ENCODE measurements at regions of chr13 and their contacts with region 1.

Region 1: GRCh38 chr13:52001120-52001731 is 10.0 kb downstream of the ATP7B start:
- DNase-seq: no peak
- ATAC-seq: peak; percentile 83
- H3K4me3 Mint-ChIP-seq: no peak overlapping the region
- H3K27ac Mint-ChIP-seq: no peak overlapping the region
- H3K4me1 Mint-ChIP-seq: no peaks in the 10 kb centered on the region
- H3K27me3 Mint-ChIP-seq: peaks cover 24% of the 10 kb centered on the region

Region 2: DNA sequence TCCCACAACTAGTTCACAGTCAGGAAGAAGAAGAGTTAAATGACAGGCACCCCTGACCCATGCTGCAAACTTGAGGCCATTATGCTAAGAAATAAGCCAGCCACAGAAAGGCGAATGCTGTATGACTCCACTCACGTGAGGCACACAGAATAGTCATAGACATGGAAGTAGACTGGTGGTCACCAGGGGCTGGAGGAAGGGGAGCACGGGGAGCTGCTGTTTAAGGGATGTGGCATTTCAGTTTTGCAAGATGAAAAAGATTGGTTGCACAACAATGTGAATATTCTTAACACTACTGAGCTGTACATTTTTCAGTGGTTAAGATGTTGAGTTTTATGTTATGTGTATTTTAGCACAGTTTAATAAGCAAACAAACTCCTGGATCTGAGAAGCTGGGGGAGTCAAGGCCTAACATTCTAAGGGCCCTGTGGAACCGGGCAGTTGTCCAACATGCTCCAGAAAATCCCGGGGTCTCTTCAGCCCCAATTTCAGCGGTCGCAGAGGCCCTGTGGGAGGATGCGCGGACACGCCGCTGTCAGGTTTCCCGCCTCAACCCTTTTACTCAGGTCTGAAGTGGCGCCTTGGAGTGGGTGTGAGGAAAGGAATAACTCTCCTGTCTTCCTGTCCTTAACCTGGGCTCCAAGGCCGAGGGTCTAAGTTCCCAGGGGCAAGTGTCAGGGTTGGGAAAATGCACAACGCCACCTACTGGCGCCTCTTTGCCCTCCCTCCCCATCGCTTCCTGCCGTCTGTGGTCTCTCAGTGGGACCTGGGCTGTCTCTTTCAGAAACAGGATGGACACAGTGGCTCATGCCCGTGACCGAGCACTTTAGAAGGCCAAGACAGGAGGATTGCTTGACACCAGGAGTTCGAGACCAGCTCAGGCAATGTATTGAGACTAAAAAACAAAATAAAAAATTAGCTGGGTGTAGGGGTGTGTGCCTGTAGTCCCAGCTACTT is 151.8 kb before region 1 on chr13:
- CTCF ChIA-PET with region 1: no interaction called
- POLR2A ChIA-PET with region 1: no interaction called
- DNase-seq: peak; percentile 54
- ATAC-seq: peak; percentile 77
- H3K4me3 Mint-ChIP-seq: no peak overlapping the region
- H3K27ac Mint-ChIP-seq: no peak overlapping the region
- H3K4me1 Mint-ChIP-seq: peaks cover 13% of the 10 kb centered on the region
- H3K27me3 Mint-ChIP-seq: peaks cover 10% of the 10 kb centered on the region

Region 3: DNA sequence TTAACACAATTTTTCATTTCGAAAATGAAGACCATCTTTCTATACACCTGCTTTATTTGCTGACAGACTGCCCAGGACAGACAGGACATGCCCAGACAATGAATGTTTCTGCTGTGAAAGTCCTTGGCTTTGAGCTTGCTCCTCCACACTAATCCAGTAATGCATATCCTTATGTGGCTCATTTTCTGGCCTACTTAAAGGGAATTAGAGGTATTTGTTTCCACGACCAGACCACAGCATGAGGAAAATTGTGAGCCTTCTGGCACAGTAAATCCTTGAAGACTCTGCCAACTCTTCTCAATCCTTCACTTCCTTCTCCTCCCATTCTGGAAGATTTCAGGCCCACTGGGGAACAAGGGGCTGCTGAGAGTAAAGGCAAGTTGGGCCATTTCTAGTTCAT is 113.8 kb before region 1 on chr13:
- CTCF ChIA-PET with region 1: no interaction called
- POLR2A ChIA-PET with region 1: no interaction called
- DNase-seq: no peak
- ATAC-seq: no peak
- H3K4me3 Mint-ChIP-seq: no peak overlapping the region
- H3K27ac Mint-ChIP-seq: no peak overlapping the region
- H3K4me1 Mint-ChIP-seq: no peaks in the 10 kb centered on the region
- H3K27me3 Mint-ChIP-seq: peaks cover 9% of the 10 kb centered on the region

Region 4: GRCh38 chr13:52011632-52012511 is 10.6 kb after region 1 on chr13 and contains the start of gene ALG11:
- CTCF ChIA-PET with region 1: interaction called, 23 read pairs
- POLR2A ChIA-PET with region 1: interaction called, 3 read pairs
- DNase-seq: peak; percentile 100
- ATAC-seq: peak; percentile 100
- H3K4me3 Mint-ChIP-seq: peak within 1 kb of the TSS; percentile 99
- H3K27ac Mint-ChIP-seq: peak within 1 kb of the TSS; percentile 92
- H3K4me1 Mint-ChIP-seq: peaks cover 13% of the 10 kb centered on the region
- H3K27me3 Mint-ChIP-seq: peaks cover 28% of the 10 kb centered on the region
- total RNA-seq, gene ALG11: 22.9 to 28.3 TPM

Region 5: GRCh38 chr13:52025475-52026245 is 24.4 kb after region 1 on chr13:
- CTCF ChIA-PET with region 1: no interaction called
- POLR2A ChIA-PET with region 1: no interaction called
- DNase-seq: no peak
- ATAC-seq: no peak
- H3K4me3 Mint-ChIP-seq: no peak overlapping the region
- H3K27ac Mint-ChIP-seq: no peak overlapping the region
- H3K4me1 Mint-ChIP-seq: peaks cover 4% of the 10 kb centered on the region
- H3K27me3 Mint-ChIP-seq: no peaks in the 10 kb centered on the region

Region 6: DNA sequence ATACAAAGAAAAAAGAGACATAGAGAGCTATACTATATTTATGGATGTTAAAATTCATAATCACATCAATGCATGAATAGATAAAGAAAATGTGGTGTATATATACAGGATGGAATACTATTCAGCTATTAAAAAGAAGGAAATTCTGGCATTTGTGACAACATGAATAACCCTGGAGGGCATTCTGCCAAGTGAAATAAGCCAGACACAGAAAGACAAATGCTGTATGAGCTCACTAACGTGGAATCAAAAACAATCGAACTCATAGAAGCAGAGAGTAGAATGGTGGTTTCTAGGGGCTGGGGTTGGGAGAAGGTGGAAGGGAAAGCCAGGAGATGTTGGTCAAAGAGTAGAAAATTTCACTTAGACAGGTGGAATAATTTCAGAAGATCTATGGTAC is 47.3 kb after region 1 on chr13:
- CTCF ChIA-PET with region 1: no interaction called
- POLR2A ChIA-PET with region 1: no interaction called
- DNase-seq: no peak
- ATAC-seq: no peak
- H3K4me3 Mint-ChIP-seq: no peak overlapping the region
- H3K27ac Mint-ChIP-seq: no peak overlapping the region
- H3K4me1 Mint-ChIP-seq: no peaks in the 10 kb centered on the region
- H3K27me3 Mint-ChIP-seq: peaks cover 2% of the 10 kb centered on the region

Region 7: DNA sequence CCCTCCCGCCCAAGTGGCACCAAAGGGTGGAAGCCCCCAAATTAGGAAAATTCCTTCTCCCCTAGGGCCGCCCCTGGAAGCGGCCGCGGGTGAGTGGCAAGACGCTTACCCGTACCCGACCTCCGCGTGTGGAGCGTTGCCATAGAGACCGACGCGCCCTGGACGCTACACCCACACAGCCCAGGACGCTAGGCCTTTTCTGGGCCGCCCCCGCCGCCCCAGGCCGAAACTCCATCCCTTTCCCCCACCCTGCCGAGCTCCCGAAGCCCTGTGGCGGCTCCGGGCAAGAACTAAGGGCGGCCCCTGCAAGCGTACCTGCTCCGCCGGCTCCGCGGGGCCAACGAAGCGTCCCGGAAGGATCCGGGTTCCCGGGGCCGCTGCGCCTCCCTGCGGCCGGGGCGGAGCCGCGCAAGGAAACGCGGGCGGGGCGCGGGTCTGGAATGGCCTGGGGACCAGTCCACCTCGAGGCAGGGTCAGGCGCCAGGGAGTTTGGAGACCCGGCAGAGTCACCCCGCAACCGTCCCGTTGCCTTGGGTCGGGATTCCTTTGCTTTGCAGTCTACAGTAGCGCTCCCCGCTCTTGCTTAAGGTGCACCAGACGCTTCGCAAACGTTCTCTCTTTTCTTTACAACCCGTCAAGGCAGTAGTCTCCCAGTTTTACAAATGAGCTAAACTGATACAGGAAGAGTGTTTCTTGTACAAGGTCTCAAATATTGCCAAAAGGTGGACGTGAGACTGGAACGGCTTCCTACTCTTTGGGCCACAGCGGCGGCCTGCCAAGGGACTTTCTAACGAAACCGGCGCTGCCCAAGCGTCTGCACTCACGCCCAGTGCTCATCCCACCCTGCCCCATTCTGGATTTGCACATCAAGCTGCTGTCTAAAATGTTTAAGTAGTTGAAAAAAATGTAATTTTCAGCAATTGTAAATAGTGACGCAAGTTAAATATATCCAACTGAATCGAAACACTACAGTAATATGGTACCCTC is 127.8 kb after region 1 on chr13 and contains the start of gene NEK5:
- CTCF ChIA-PET with region 1: interaction called, 44 read pairs
- POLR2A ChIA-PET with region 1: no interaction called
- DNase-seq: peak; percentile 60
- ATAC-seq: peak; percentile 89
- H3K4me3 Mint-ChIP-seq: peak within 1 kb of the TSS; percentile 72
- H3K27ac Mint-ChIP-seq: no peak within 1 kb of the TSS
- H3K4me1 Mint-ChIP-seq: peaks cover 16% of the 10 kb centered on the region
- H3K27me3 Mint-ChIP-seq: peaks cover 17% of the 10 kb centered on the region
- total RNA-seq, gene NEK5: not detected